ENCODE measurements at regions of chr7 and their contacts with region 1.

Region 1: GRCh38 chr7:131412031-131412430 is 84.4 kb downstream of the MKLN1 start:
- DNase-seq: no peak
- ATAC-seq: no peak
- H3K4me3 Mint-ChIP-seq: no peak overlapping the region
- H3K27ac Mint-ChIP-seq: no peak overlapping the region
- H3K4me1 Mint-ChIP-seq: peaks cover 36% of the 10 kb centered on the region
- H3K27me3 Mint-ChIP-seq: no peaks in the 10 kb centered on the region
- CTCF ChIP-seq: no peak

Region 2: DNA sequence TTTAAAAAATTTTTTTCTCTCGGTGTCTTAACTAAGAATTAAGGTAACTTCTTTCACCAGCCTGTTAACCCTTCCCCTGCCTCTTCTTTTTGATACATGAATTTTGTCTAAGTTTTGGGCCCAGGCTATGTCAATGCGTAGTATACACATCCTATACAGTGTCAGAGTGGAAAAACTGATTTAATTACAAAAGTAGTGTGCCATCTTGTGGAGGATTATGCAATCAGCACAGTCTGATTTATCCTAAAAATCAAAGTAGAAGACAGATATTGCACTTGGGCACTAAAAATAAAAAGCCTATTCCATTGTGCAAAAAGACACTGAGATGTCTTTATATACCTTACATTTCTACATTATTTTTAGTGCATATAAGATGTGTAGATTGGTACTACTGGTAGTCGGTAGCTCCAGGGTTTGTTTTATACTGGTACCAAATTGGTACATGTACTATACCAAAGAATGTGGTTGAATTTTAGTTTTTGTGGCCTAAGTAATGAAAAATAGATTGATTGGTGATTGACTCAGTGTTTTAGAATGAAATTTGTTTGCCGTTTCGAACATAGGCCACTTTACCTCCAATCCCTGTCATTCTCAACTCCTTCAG is 12.3 kb after region 1 on chr7:
- CTCF ChIA-PET with region 1: no interaction called
- POLR2A ChIA-PET with region 1: interaction called, 11 read pairs
- DNase-seq: no peak
- ATAC-seq: peak; percentile 51; the same call in 1 of the 2 replicates
- H3K4me3 Mint-ChIP-seq: no peak overlapping the region
- H3K27ac Mint-ChIP-seq: no peak overlapping the region
- H3K4me1 Mint-ChIP-seq: peaks cover 12% of the 10 kb centered on the region
- H3K27me3 Mint-ChIP-seq: no peaks in the 10 kb centered on the region
- CTCF ChIP-seq: no peak

Region 3: DNA sequence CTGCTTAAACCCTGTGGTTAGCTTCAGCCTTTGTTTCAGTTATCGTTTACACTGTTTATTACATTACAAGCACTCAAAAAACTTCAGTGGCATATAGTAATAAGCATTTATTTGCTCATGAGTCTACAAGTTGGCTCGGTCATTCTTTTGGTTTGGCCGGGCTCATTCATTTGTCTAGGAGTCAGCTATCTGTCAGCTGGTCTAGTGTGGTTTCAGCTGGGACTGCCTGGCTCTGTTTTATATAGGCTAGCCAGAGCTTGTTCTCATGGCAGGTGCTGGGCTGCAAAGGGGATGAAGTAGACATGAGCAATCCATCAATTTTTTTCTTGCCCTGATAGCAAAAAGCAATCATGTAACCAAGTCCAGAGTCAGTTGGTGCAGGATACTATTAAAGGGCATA is 19.3 kb after region 1 on chr7:
- CTCF ChIA-PET with region 1: no interaction called
- POLR2A ChIA-PET with region 1: interaction called, 10 read pairs
- DNase-seq: no peak
- ATAC-seq: no peak
- H3K4me3 Mint-ChIP-seq: no peak overlapping the region
- H3K27ac Mint-ChIP-seq: peak overlapping the region; percentile 86; the same call in 1 of the 2 replicates
- H3K4me1 Mint-ChIP-seq: no peaks in the 10 kb centered on the region
- H3K27me3 Mint-ChIP-seq: no peaks in the 10 kb centered on the region
- CTCF ChIP-seq: no peak

Measured in WTC11 (cell line).